ENCODE measurements at regions of chr12 and their contacts with region 1.

Region 1: GRCh38 chr12:122500685-122501488 is at the start of gene ZCCHC8:
- DNase-seq: peak; percentile 96
- ATAC-seq: peak; percentile 94
- H3K4me3 ChIP-seq: peak within 1 kb of the TSS; percentile 84 to 98 (median 86)
- H3K27ac ChIP-seq: peak within 1 kb of the TSS; percentile 98
- H3K4me1 ChIP-seq: peaks cover 34% of the 10 kb centered on the region
- H3K27me3 ChIP-seq: no peaks in the 10 kb centered on the region; a peak in 1 of 5 replicates
- CTCF ChIP-seq: peak; percentile 45
- EP300 ChIP-seq: no peak; a peak in 1 of 4 replicates
- POLR2A ChIP-seq: peak; percentile 78 to 92
- RAD21 ChIP-seq: no peak
- total RNA-seq, gene ZCCHC8: 14.2 and 20.9 TPM in 2 replicates

Region 2: GRCh38 chr12:122513660-122514059 is 12.8 kb after region 1 on chr12:
- CTCF ChIA-PET with region 1: no interaction called
- POLR2A ChIA-PET with region 1: interaction called, 13 read pairs
- in situ Hi-C with region 1: no loop called
- intact Hi-C with region 1: no loop called
- DNase-seq: no peak
- ATAC-seq: peak; percentile 33; the same call in 2 of the 3 replicates
- H3K4me3 ChIP-seq: no peak overlapping the region
- H3K27ac ChIP-seq: no peak overlapping the region
- H3K4me1 ChIP-seq: no peaks in the 10 kb centered on the region
- H3K27me3 ChIP-seq: no peaks in the 10 kb centered on the region
- CTCF ChIP-seq: no peak
- EP300 ChIP-seq: no peak
- POLR2A ChIP-seq: no peak
- RAD21 ChIP-seq: no peak

Region 3: DNA sequence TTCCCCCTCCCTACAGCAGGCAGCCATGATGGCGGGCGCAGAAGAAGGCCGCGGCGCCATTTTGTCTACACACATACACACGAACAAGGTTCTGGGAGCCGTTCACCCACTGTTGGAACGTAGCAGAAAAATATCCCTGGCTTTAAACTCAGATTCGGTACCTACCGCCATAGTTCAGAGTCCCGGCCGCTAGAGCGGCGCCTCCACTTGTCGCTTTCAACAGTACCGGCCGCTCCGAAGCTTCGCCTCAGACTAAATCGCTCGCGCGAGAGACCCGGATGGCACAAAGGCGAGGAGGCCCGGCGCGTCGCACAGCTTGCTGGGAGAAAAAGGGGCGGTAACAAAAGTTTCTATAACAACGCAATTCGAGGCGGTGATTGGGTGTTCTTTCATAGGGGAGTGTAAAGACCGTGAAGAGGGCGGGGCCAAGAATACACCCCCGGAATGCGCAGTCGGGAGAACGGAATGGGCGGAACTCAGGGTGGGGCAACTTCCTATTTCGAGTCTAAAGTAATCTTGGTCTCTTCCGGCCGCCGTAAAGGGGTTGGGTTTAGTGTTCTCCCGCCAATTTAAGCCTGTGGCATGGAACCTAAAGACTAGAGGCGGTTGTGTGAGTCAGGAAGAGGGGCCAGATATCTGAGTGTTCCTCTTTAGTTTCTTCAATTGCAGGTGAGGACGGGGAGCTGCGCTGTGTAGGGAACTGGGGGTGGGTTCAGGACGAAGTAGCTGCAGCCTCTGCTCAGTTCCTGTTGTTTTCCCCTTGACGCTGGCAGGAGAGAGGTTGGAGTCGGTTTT is 26.0 kb after region 1 on chr12 and contains the starts of genes KNTC1 and RSRC2:
- CTCF ChIA-PET with region 1: no interaction called
- POLR2A ChIA-PET with region 1: interaction called, 43 read pairs
- in situ Hi-C with region 1: no loop called
- intact Hi-C with region 1: no loop called
- DNase-seq: peak; percentile 99
- ATAC-seq: peak; percentile 92
- H3K4me3 ChIP-seq: peak within 1 kb of the TSS; percentile 75 to 96 (median 89)
- H3K27ac ChIP-seq: peak within 1 kb of the TSS; percentile 100
- H3K4me1 ChIP-seq: peaks cover 31% of the 10 kb centered on the region
- H3K27me3 ChIP-seq: no peaks in the 10 kb centered on the region; a peak in 1 of 5 replicates
- CTCF ChIP-seq: no peak
- EP300 ChIP-seq: peak; percentile 8 to 34
- POLR2A ChIP-seq: peak; percentile 81 to 99
- RAD21 ChIP-seq: peak; percentile 16; the same call in 1 of the 2 replicates
- total RNA-seq, gene KNTC1: 49.2 and 57.6 TPM in 2 replicates
- total RNA-seq, gene RSRC2: 77.8 and 85.8 TPM in 2 replicates

Measured in HepG2 (cell line).